Activated CD8-positive, alpha-beta memory T cell treated with anti-CD3 and anti-CD28 coated beads, Interleukin-2, amount 10 ng/mL, durations not matched to agents 7 days and 5 days (primary cell): ENCODE measurements at regions of chr17 and their contacts with region 1.

Region 1: GRCh38 chr17:76397687-76398487 is 13.5 kb downstream of the SPHK1 start:
- DNase-seq: peak; percentile 91
- ATAC-seq: peak; percentile 90
- H3K4me3 Mint-ChIP-seq: no peak overlapping the region
- H3K27ac Mint-ChIP-seq: no peak overlapping the region
- H3K4me1 Mint-ChIP-seq: no peaks in the 10 kb centered on the region
- H3K27me3 Mint-ChIP-seq: no peaks in the 10 kb centered on the region

Region 2: GRCh38 chr17:76063875-76064546 is 333.9 kb before region 1 on chr17:
- CTCF ChIA-PET with region 1: interaction called, 11 read pairs
- DNase-seq: peak; percentile 74
- ATAC-seq: peak; percentile 94
- H3K4me3 Mint-ChIP-seq: peak overlapping the region; percentile 57
- H3K27ac Mint-ChIP-seq: peak overlapping the region; percentile 87
- H3K4me1 Mint-ChIP-seq: peaks cover 25% of the 10 kb centered on the region
- H3K27me3 Mint-ChIP-seq: no peaks in the 10 kb centered on the region

Region 3: GRCh38 chr17:76353599-76354316 is 44.1 kb before region 1 on chr17 and contains the start of gene PRPSAP1:
- CTCF ChIA-PET with region 1: interaction called, 20 read pairs
- DNase-seq: peak; percentile 90
- ATAC-seq: peak; percentile 95
- H3K4me3 Mint-ChIP-seq: peak within 1 kb of the TSS; percentile 98
- H3K27ac Mint-ChIP-seq: peak within 1 kb of the TSS; percentile 99
- H3K4me1 Mint-ChIP-seq: peaks cover 34% of the 10 kb centered on the region
- H3K27me3 Mint-ChIP-seq: no peaks in the 10 kb centered on the region
- total RNA-seq, gene PRPSAP1: 63.9 to 64.7 TPM

Region 4: DNA sequence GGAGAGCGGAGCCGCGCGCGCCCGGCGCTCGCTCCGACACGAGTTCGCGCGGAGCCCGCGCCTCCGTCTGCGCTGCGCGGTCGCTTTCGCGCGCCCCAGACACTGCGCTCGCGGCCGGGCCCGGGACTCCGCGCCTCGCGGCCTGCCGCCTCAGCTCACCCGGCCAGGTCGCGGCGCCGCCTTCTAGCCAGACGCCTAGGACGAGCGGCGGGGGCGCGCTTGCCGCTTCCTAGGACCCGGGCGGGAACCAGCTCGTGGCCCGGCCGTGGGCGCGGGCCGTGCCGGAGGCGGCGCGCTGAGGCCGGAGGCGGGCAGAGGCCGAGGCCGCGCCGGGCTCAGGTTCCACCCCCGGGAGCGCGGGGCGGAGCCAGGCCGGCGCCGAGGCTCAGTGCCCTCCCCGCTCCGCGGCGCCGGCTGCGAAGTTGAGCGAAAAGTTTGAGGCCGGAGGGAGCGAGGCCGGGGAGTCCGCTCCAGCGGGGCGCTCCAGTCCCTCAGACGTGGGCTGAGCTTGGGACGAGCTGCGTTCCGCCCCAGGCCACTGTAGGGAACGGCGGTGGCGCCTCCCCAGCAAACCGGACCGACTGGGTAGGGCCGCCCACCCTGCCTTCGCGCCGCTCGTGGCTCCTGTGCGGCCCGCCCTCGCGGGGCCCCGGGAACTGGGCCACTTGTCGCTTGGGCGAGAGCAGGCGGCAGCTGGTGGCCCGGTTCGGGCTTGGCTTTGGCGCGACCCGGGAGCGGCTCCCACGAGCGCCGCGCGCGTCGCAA is 13.5 kb before region 1 on chr17 and contains the start of gene SPHK1:
- CTCF ChIA-PET with region 1: interaction called, 158 read pairs
- DNase-seq: peak; percentile 79
- ATAC-seq: peak; percentile 74
- H3K4me3 Mint-ChIP-seq: peak within 1 kb of the TSS; percentile 81
- H3K27ac Mint-ChIP-seq: peak within 1 kb of the TSS; percentile 89
- H3K4me1 Mint-ChIP-seq: peaks cover 17% of the 10 kb centered on the region
- H3K27me3 Mint-ChIP-seq: no peaks in the 10 kb centered on the region
- total RNA-seq, gene SPHK1: 5.4 to 8.4 TPM

Region 5: GRCh38 chr17:76432712-76433336 is 34.9 kb after region 1 on chr17:
- CTCF ChIA-PET with region 1: interaction called, 12 read pairs
- DNase-seq: no peak
- ATAC-seq: peak; percentile 39
- H3K4me3 Mint-ChIP-seq: no peak overlapping the region
- H3K27ac Mint-ChIP-seq: no peak overlapping the region
- H3K4me1 Mint-ChIP-seq: peaks cover 4% of the 10 kb centered on the region
- H3K27me3 Mint-ChIP-seq: no peaks in the 10 kb centered on the region

Region 6: DNA sequence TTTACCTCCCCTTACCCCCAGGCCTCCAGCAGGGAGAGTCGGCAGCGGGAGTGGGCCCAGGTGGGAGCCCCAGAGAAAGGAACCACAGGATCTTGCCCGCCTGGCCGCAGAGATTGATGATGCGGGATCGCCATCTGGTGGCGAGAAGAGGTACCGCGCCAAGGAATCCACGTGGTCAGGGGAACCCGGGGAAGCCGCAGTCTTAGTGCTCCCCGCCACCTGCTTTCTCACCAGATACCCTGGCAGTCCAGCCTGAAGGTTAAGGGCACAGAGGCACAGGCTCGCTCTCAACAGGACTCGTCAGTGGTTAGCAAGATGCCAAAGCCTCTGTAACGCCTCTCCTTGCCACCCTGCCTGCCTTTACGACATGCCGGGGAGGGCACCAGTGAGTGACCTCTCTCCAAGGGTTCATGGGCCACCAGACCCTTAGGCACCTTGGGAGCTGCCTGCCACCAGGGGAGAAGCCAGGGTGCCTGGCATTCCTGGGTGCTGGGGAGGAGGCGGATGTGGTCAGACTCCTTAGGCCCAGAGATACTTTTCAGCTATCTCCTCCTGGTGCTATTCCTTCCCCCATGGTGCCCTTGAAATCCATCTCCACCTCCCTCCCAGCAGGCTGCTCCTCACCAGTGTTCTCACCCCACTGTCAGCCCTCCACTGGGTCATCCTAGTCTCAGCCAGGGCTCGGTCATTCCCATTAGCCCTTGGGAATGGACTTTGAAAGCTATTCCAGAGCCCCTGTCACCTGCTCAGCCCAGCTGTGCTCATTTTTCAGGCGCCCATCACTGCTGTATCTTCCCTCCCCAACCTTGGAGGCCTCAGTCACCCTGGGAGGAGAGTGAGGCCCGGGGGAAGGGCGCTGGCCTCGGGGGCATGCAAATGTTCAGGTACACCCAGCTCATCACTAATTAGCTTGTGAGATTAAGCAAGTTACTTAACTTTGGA is 108.8 kb after region 1 on chr17:
- CTCF ChIA-PET with region 1: interaction called, 14 read pairs
- DNase-seq: peak; percentile 91
- ATAC-seq: peak; percentile 82
- H3K4me3 Mint-ChIP-seq: no peak overlapping the region
- H3K27ac Mint-ChIP-seq: no peak overlapping the region
- H3K4me1 Mint-ChIP-seq: peaks cover 22% of the 10 kb centered on the region
- H3K27me3 Mint-ChIP-seq: no peaks in the 10 kb centered on the region

Region 7: DNA sequence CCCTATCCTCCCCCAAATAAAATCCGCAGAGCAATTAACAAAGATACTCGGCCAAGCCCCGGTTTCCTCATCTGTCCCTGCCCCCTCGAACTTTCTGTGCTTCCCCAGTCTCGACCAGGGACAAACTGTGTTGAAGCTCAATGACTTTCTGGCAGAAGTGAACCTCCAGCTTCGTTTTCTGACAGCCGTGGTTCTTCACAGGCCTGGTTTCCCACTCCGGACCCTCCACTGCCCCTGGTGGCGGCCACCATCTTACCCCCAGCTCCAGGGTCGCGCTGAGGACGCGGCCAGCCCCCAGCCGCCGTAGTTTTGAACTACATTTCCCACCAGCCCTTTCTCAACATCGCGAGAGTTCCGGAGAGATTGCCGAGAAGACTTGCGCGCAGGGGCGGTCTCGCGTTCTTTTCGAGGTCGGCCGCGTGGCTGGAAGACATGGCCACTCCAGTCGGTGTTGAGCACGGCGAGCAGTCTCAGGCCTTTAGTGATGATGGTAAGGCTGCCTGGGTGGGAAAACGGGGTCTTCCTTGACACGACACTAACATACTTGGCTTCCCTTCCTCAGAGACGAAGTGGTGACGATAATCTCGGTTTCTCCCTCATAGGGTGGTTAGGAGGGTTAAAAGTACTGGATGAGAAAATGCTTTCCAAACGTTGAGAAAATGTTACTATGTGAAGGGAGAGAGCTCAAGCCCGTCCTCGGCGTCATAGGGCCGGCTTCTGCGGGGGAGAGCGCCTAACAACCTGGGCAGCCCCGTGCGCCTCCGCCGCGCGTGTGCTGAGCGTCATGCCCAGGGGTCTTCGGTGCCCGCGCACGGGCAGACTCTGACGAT is 159.7 kb after region 1 on chr17:
- CTCF ChIA-PET with region 1: no interaction called
- DNase-seq: peak; percentile 97
- ATAC-seq: peak; percentile 91
- H3K4me3 Mint-ChIP-seq: peak overlapping the region; percentile 98
- H3K27ac Mint-ChIP-seq: peak overlapping the region; percentile 96
- H3K4me1 Mint-ChIP-seq: peaks cover 60% of the 10 kb centered on the region
- H3K27me3 Mint-ChIP-seq: no peaks in the 10 kb centered on the region